Head of caudate nucleus (tissue), 42 donors: ENCODE measurements at regions of chr7 and their contacts with region 1.

Region 1: DNA sequence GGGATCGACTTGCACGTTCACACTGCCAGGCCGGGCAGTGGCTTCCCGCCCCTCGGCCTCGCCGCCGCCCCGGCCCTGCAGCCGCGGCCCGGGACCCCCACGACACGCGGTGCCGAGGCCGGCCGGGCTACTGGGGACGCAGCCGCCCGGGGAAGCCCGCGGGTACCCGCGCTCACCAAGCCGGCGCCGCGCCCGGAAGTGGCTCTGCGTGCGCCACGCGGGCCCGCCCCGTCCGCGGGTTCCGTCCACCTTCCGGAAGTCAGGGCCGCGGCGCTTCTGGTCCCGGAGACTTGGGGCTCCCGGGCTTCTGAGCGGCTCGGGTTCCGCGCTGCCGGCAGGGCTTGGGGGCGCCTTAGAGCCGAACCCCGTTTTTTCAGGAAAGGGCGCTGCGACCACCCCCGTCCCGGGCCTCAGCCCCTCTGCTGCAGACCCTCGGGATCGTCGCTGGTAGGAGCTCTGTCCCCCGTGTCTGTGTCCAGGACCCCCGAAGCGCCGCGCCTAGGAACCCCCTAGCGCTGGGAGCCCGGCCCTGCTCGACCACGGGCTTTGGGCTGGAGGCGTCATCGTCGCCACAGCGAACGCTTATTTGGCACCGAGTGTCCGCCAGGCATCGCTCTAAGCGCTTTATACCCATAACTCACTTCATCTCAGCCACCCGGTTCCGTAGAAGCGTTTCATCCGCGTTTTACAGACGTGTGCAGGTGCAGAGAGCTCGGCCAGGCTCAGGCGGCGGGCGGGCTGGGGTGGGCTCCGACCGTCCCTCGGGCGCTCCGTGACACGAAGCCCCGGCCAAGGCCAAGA is at the start of gene PSMG3:
- DNase-seq: peak; percentile 72 to 97 (median 92)

Region 2: GRCh38 chr7:1503816-1504775 is 65.9 kb before region 1 on chr7 and contains the start of gene INTS1:
- intact Hi-C with region 1: loop called (anchors 10 kb)
- DNase-seq: peak; percentile 76 to 98 (median 94)

Region 3: GRCh38 chr7:2209146-2209960 is 639.3 kb after region 1 on chr7:
- intact Hi-C with region 1: loop called (anchors 10 kb)
- DNase-seq: peak; percentile 71 to 94 (median 85)

Region 4: DNA sequence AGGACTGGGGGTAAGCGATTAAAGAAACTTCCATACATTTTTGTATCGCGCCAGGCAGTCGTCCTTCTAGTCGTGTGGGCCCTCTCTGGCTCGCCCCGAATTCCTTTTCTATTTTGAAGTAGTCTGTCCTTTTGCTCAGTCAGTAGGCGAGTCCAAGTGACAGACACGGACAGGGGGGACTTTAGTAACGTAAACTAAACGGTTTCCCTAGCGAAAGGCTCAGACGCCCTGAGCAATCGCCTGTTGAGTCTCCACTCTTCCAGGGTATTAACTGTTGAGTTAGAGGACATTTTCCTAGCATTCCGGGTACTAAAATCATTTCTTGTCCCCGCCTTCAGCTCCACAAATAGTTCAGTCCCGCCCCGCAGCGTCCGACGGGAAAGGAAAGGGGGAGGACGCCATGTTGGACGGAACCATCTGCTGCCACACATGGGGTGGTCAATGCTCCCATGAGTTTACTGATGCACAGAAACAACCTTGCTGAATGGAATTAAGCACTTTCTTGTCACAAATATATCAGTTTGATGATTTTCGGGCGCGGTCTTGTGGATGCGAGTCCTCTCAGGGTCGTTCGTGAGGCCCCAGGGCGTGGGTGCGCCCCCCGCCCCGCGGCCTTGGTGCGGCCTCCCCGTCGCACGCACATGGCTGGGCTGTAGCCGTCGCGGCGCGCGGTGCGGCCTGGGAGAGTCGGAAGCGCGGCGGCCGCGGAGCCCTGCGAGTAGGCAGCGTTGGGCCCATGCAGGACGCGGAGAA is 784.3 kb after region 1 on chr7 and contains the start of gene EIF3B:
- intact Hi-C with region 1: loop called (anchors 10 kb)
- DNase-seq: peak; percentile 73 to 95 (median 87)